ENCODE measurements at regions of chr22 and their contacts with region 1.

Region 1: GRCh38 chr22:37933711-37934376 is 19.6 kb downstream of the C22orf23 start:
- DNase-seq: peak; percentile 54 to 86 (median 78)
- ATAC-seq: peak; percentile 100
- H3K4me3 ChIP-seq: no peak overlapping the region
- H3K4me3 Mint-ChIP-seq: no peak overlapping the region
- H3K27ac ChIP-seq: no peak overlapping the region
- H3K27ac Mint-ChIP-seq: no peak overlapping the region
- H3K4me1 ChIP-seq: peaks cover 7% of the 10 kb centered on the region
- H3K4me1 Mint-ChIP-seq: peaks cover 8% of the 10 kb centered on the region
- H3K27me3 ChIP-seq: no peaks in the 10 kb centered on the region
- H3K27me3 Mint-ChIP-seq: no peaks in the 10 kb centered on the region
- CTCF ChIP-seq: peak; percentile 82

Region 2: DNA sequence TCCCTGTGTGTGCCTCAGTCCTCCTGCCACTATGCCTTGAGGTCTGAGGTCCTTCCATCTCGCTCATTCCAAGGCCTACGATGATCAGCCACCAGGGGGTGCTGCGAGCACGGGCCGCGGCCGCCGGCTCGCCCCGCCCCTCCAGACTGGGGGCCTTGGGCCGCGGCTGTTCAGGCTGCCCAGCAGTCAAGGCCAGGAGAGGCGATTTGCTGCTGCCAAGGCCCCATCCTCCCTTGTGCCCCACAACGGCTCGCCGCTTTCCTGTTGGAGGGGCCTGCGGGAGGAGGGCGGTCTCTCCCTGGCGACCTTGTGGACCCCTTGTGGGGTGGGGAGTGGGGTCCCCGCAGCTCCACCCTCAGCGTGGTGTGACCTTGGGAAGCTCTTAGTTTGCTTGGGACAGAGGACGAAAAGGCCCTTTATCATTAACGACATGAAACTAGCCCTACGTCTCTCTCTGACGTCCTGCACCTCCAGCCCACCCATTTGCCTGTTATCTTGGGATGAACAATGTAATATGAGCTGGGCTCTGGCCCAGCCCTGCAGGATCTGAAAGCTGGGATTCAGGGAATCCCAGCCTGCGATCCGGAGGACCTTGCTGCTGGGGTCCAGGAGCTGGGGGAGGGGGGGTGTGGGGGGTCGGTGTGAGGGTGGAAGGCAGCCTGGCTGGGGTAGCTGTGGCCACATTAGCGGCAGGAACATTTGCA is 116.0 kb before region 1 on chr22:
- CTCF ChIA-PET with region 1: interaction called, 42 read pairs
- POLR2A ChIA-PET with region 1: no interaction called
- intact Hi-C with region 1: loop called (anchors 1 kb)
- DNase-seq: peak; percentile 64 to 88 (median 81)
- ATAC-seq: peak; percentile 86
- H3K4me3 ChIP-seq: peak overlapping the region; percentile 20 to 38
- H3K4me3 Mint-ChIP-seq: peak overlapping the region; percentile 65
- H3K27ac ChIP-seq: no peak overlapping the region
- H3K27ac Mint-ChIP-seq: no peak overlapping the region
- H3K4me1 ChIP-seq: peaks cover 16% of the 10 kb centered on the region
- H3K4me1 Mint-ChIP-seq: peaks cover 15% of the 10 kb centered on the region
- H3K27me3 ChIP-seq: peaks cover under 1 to 4% of the 10 kb centered on the region in 2 experiments
- H3K27me3 Mint-ChIP-seq: peaks cover 17% of the 10 kb centered on the region
- CTCF ChIP-seq: peak; percentile 86

Region 3: GRCh38 chr22:37887610-37888378 is 46.0 kb before region 1 on chr22:
- CTCF ChIA-PET with region 1: interaction called, 5 read pairs
- POLR2A ChIA-PET with region 1: no interaction called
- intact Hi-C with region 1: loop called (anchors 1 to 10 kb)
- DNase-seq: peak in 1 of 9 experiments; percentile 18
- ATAC-seq: no peak
- H3K4me3 ChIP-seq: no peak overlapping the region
- H3K4me3 Mint-ChIP-seq: no peak overlapping the region
- H3K27ac ChIP-seq: no peak overlapping the region
- H3K27ac Mint-ChIP-seq: peak overlapping the region; percentile 71
- H3K4me1 ChIP-seq: no peaks in the 10 kb centered on the region
- H3K4me1 Mint-ChIP-seq: peaks cover 16% of the 10 kb centered on the region
- H3K27me3 ChIP-seq: no peaks in the 10 kb centered on the region
- H3K27me3 Mint-ChIP-seq: no peaks in the 10 kb centered on the region
- CTCF ChIP-seq: no peak

Region 4: DNA sequence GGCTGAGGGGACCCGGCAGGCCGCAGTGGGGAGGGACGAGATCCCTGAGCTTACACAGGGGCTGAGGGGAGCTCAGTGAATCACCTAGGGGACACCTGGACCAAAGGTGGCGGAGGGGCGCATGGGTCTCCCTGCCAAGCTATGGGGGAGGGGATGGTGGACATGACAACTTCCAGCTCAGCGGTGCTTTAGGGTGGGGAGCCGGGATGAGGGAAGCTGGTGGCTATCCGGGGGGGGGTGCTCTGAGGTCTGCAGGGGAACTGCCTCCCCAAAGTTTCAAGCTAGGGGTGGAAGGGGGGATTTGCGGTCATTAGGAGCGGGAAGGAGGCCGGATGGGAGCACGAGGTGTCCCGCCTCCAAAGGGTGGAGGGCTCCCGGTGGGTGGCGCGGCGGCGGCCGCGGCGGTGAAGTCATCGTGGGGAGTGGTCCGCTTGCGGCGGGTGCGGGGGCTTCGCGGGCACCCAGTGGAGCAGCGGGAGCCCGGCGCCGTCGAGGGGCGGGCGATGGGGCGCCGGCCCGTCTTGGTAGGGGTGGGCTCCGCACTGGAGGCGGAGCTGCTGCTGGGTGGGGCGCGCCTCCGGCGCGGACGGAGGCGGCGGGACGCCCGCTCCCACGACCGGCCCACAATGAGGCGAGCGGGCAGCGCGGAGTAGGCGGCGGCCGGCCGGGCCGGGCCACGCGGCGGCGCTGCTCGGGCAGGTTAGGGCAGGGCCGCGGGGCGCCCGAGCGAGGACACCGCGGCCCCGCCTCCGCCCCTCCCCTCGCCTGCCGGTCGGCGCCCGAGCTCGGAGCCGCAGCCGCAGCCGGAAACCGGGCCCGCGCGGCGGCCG is 28.1 kb before region 1 on chr22 and contains the start of gene MICALL1:
- CTCF ChIA-PET with region 1: interaction called, 38 read pairs
- POLR2A ChIA-PET with region 1: no interaction called
- intact Hi-C with region 1: loop called (anchors 1 to 2 kb)
- DNase-seq: peak; percentile 13 to 84 (median 65)
- ATAC-seq: peak; percentile 79
- H3K4me3 ChIP-seq: peak within 1 kb of the TSS; percentile 45 to 55
- H3K4me3 Mint-ChIP-seq: peak within 1 kb of the TSS; percentile 81
- H3K27ac ChIP-seq: peak within 1 kb of the TSS; percentile 35 to 70
- H3K27ac Mint-ChIP-seq: peak within 1 kb of the TSS; percentile 84
- H3K4me1 ChIP-seq: peaks cover 13% of the 10 kb centered on the region
- H3K4me1 Mint-ChIP-seq: peaks cover 33% of the 10 kb centered on the region
- H3K27me3 ChIP-seq: no peaks in the 10 kb centered on the region
- H3K27me3 Mint-ChIP-seq: no peaks in the 10 kb centered on the region
- CTCF ChIP-seq: no peak
- total RNA-seq, gene MICALL1: 15.3 to 18.1 TPM

Region 5: DNA sequence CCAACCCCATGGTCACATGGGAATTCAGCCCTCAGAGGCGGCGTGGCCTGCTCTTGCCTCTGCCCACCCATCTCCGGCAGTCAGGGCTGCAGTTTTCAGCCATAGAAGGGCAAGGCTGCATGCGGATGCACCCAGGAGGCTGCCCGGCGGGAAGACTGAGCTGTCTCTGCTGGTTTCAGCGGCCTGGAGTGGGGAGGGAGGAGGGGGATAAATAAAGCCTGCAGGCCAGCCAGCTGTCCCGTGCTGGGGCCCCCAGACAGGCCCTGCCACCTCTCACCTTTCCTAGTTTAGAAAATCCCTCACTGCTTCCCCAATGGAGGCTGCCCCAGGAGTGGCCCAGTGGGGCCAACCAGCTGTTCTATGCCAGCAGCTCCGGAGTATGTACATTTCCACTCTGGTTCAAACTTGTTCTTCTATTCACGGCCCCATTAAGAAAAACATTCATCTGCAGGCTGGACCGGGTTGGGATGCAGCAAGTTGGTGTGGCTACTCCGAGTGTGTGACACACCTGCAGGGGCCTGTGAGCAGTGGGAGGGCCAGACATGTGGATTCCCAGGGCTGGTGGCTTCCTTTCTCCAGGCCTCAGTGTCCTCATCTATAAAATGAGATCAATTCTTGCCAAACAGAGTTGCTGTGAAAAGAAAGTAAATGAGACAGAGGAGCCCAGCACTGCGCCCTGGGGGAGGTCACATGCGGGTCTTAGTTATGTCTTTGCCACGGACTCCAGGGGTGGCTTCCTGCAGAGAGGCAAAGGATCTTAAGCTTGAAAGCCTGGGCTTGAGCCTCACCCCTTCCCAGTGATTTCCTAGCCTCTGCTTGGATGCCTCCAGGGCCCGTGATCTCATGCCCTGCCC is 22.7 kb before region 1 on chr22:
- CTCF ChIA-PET with region 1: interaction called, 38 read pairs
- POLR2A ChIA-PET with region 1: no interaction called
- intact Hi-C with region 1: loop called (anchors 1 to 2 kb)
- DNase-seq: no peak
- ATAC-seq: no peak
- H3K4me3 ChIP-seq: no peak overlapping the region
- H3K4me3 Mint-ChIP-seq: no peak overlapping the region
- H3K27ac ChIP-seq: no peak overlapping the region
- H3K27ac Mint-ChIP-seq: no peak overlapping the region
- H3K4me1 ChIP-seq: peaks cover 17% of the 10 kb centered on the region
- H3K4me1 Mint-ChIP-seq: peaks cover 40% of the 10 kb centered on the region
- H3K27me3 ChIP-seq: no peaks in the 10 kb centered on the region
- H3K27me3 Mint-ChIP-seq: no peaks in the 10 kb centered on the region
- CTCF ChIP-seq: no peak

Region 6: GRCh38 chr22:38074181-38075104 is 140.6 kb after region 1 on chr22:
- CTCF ChIA-PET with region 1: no interaction called
- POLR2A ChIA-PET with region 1: no interaction called
- intact Hi-C with region 1: no loop called
- DNase-seq: no peak
- ATAC-seq: no peak
- H3K4me3 ChIP-seq: no peak overlapping the region
- H3K4me3 Mint-ChIP-seq: no peak overlapping the region
- H3K27ac ChIP-seq: no peak overlapping the region
- H3K27ac Mint-ChIP-seq: no peak overlapping the region
- H3K4me1 ChIP-seq: no peaks in the 10 kb centered on the region
- H3K4me1 Mint-ChIP-seq: no peaks in the 10 kb centered on the region
- H3K27me3 ChIP-seq: no peaks in the 10 kb centered on the region
- H3K27me3 Mint-ChIP-seq: peaks cover under 1% of the 10 kb centered on the region
- CTCF ChIP-seq: no peak

Region 7: GRCh38 chr22:38124236-38124974 is 190.6 kb after region 1 on chr22:
- CTCF ChIA-PET with region 1: no interaction called
- POLR2A ChIA-PET with region 1: no interaction called
- intact Hi-C with region 1: no loop called
- DNase-seq: no peak
- ATAC-seq: no peak
- H3K4me3 ChIP-seq: no peak overlapping the region
- H3K4me3 Mint-ChIP-seq: no peak overlapping the region
- H3K27ac ChIP-seq: no peak overlapping the region
- H3K27ac Mint-ChIP-seq: no peak overlapping the region
- H3K4me1 ChIP-seq: no peaks in the 10 kb centered on the region
- H3K4me1 Mint-ChIP-seq: no peaks in the 10 kb centered on the region
- H3K27me3 ChIP-seq: no peaks in the 10 kb centered on the region
- H3K27me3 Mint-ChIP-seq: no peaks in the 10 kb centered on the region
- CTCF ChIP-seq: no peak

Measured in CD8-positive, alpha-beta T cell (primary cell).